ENCODE measurements at regions of chr10 and their contacts with region 1.

Region 1: DNA sequence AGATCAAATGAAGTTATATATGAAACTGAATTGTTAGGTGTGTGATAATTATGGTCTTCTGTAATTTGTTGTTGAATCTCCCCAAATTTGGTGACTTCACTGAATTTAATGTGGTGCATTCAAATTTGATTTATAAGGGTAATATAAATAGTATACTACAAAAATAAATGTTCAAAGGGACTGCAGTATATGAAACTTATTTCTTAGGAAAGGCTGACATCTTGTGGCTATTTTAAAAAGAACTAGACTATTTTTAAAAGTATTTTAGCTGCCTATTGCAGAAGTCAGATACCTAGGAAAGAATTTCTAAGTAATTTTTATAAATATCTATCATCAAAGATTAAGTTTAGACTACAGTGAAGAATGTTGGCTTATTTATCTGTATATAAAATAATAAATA is 36.6 kb downstream of the ATRNL1 start:
- DNase-seq: peak; percentile 12
- CTCF ChIP-seq: peak; percentile 16

Region 2: DNA sequence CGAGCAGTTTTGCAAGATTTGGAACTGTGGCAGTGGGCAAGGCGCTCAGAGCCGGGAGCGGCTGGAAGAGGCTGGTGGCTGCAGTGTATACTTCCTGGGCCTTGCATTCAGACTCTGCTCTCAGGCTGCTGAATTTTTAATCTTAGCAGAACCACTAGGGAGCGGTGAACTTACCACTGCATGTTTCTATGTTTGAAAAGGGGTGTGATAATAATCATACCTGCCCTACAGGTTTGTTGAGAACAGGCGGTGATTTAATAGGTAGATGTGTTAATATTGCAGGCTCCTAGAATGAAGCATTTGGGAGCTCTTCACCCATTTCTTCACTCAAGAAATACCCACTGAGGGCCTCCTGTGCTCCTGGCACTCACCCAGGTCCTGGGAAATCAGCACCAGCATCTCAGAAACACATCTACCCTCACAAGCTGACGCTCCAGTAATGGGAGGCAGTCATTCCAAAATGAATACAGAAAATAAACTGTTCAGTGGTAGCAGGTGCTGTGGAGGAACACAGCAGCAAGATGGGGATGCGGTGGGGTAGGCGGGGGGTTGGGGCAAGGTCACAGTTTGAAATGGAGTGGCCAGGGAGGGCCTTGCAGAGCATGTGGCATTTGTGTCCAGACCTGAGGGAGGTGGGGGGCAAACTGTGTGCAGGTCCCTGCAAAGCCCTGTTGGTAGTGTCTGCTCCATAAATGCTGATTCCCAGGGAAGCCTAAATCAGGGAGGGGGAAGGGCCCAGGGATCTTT is 849.7 kb before region 1 on chr10:
- in situ Hi-C with region 1: loop called (anchors 25 kb)
- DNase-seq: no peak
- CTCF ChIP-seq: no peak

Region 3: DNA sequence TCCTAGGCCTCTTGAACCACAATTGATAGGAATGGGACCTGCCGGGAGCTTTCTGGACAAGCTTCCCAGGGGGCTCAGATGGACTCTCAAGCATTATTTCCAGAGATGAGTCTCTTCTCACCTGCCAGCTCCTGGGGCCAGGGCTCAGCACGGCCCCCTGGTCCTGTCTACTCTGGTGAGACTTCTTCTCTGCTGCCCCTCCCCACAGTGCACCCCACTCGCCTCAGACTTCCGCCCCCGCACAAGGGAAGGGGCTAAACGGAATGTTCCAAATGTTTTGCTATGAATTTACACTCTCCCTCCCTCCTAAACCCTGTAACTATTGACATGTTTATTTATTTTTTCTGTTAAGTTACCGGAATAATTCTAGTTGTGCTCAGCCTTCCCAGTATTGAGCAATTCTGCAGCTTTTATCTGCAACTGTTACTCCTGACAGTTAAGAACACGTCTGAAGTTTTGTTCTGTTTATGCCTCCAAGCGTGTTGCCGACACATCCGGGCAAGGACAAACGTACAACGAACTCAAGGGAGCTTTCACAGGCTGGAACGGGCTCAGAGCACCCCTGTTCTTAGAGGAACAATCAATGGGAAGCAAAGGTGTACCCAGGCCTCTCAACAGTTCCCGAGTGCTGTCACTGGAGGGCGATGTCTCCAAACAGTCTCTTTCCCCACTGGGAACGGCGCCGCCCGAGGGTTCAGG is 253.0 kb before region 1 on chr10:
- in situ Hi-C with region 1: loop called (anchors 10 kb)
- DNase-seq: peak; percentile 80
- CTCF ChIP-seq: peak; percentile 74

Region 4: GRCh38 chr10:115209133-115209532 is 79.4 kb after region 1 on chr10:
- in situ Hi-C with region 1: no loop called
- DNase-seq: no peak
- CTCF ChIP-seq: no peak

Measured in GM13976 (cell line).